ENCODE measurements at regions of chr4 and their contacts with region 1.

Region 1: DNA sequence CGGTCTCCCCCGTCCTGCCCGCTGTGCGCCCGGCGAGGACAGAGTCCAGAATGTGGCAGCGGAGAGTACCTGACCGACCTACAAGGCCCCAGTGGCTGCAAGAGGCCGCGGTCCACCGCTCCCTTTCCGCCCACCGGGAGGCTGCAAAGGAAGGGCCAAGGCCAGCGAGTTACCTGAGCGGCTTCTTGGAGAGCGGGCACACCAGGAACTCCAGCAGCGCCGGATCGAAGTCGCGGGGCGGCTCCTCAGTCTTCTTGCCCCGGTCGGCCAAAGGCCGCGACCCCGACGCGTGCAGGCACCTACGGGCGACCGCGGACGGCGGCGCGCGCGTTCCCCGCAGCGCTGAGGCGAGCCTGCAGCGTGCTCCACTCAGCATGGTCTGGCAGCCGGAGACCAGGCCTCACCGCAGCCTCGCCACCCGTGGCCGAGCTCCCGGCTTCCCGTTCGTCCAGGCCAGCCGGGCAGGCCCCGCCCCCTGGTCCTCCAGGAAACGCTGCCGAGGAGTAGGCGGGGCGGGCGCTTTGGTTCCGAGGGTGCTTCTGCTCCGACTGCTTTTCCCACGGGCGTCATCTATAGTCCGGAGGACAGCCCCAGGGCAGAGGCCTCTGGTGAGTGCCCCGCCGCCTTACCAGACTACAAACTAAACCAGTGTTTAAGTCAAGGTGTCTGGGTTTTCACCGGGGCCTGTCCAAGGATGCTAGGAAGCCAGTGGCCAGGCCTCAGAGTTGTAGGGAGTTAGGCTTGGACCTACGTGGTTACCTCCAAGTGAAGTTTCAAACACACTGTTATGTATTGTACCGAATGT is at the start of gene PYURF:
- DNase-seq: peak; percentile 91
- ATAC-seq: peak; percentile 97
- H3K4me3 ChIP-seq: peak within 1 kb of the TSS; percentile 89
- H3K27ac ChIP-seq: peak within 1 kb of the TSS; percentile 90
- H3K4me1 ChIP-seq: peaks cover 3% of the 10 kb centered on the region
- H3K27me3 ChIP-seq: no peaks in the 10 kb centered on the region
- CTCF ChIP-seq: 0 out of 2 replicates have a peak, but pooled peaks have one; percentile 0
- POLR2A ChIP-seq: peak; percentile 76
- RAD21 ChIP-seq: no peak
- total RNA-seq, gene PYURF: 43.4 and 61.7 TPM in 2 replicates

Region 2: GRCh38 chr4:88244816-88245579 is 278.5 kb before region 1 on chr4:
- CTCF ChIA-PET with region 1: no interaction called
- POLR2A ChIA-PET with region 1: no interaction called
- dilution Hi-C with region 1: loop called (anchors 25 kb)
- in situ Hi-C with region 1: no loop called
- intact Hi-C with region 1: no loop called
- DNase-seq: no peak
- ATAC-seq: no peak
- H3K4me3 ChIP-seq: no peak overlapping the region
- H3K27ac ChIP-seq: no peak overlapping the region
- H3K4me1 ChIP-seq: no peaks in the 10 kb centered on the region
- H3K27me3 ChIP-seq: no peaks in the 10 kb centered on the region; the same call in 1 of the 2 replicates
- CTCF ChIP-seq: no peak
- POLR2A ChIP-seq: no peak
- RAD21 ChIP-seq: no peak

Region 3: GRCh38 chr4:89110986-89111832 is 587.7 kb after region 1 on chr4 and contains the start of gene TIGD2:
- CTCF ChIA-PET with region 1: no interaction called
- POLR2A ChIA-PET with region 1: no interaction called
- dilution Hi-C with region 1: no loop called
- in situ Hi-C with region 1: loop called (anchors 10 kb)
- intact Hi-C with region 1: no loop called
- DNase-seq: peak; percentile 81
- ATAC-seq: peak; percentile 96
- H3K4me3 ChIP-seq: peak within 1 kb of the TSS; percentile 94
- H3K27ac ChIP-seq: peak within 1 kb of the TSS; percentile 89
- H3K4me1 ChIP-seq: 0 out of 2 replicates have a peak, but pooled peaks cover 2% of the 10 kb centered on the region
- H3K27me3 ChIP-seq: peaks cover 24% of the 10 kb centered on the region
- CTCF ChIP-seq: peak; percentile 69
- POLR2A ChIP-seq: no peak
- RAD21 ChIP-seq: peak; percentile 51
- total RNA-seq, gene TIGD2: 12.4 and 16.4 TPM in 2 replicates